ENCODE measurements at regions of chr7 and their contacts with region 1.

Region 1: GRCh38 chr7:26090927-26091519 is 61.0 kb upstream of the NFE2L3 start:
- DNase-seq: peak in 3 of 10 donors; percentile 60 to 65 (median 62)
- ATAC-seq: peak; percentile 72 to 83
- H3K4me3 Mint-ChIP-seq: peak overlapping the region in 6 of 10 donors; percentile 11 to 67 (median 41)
- H3K27ac Mint-ChIP-seq: peak overlapping the region in 5 of 10 donors; percentile 0 to 49 (median 24)
- H3K4me1 Mint-ChIP-seq: peaks cover 12 to 25% (median 21%) of the 10 kb centered on the region in 4 donors
- H3K27me3 Mint-ChIP-seq: no peaks in the 10 kb centered on the region

Region 2: DNA sequence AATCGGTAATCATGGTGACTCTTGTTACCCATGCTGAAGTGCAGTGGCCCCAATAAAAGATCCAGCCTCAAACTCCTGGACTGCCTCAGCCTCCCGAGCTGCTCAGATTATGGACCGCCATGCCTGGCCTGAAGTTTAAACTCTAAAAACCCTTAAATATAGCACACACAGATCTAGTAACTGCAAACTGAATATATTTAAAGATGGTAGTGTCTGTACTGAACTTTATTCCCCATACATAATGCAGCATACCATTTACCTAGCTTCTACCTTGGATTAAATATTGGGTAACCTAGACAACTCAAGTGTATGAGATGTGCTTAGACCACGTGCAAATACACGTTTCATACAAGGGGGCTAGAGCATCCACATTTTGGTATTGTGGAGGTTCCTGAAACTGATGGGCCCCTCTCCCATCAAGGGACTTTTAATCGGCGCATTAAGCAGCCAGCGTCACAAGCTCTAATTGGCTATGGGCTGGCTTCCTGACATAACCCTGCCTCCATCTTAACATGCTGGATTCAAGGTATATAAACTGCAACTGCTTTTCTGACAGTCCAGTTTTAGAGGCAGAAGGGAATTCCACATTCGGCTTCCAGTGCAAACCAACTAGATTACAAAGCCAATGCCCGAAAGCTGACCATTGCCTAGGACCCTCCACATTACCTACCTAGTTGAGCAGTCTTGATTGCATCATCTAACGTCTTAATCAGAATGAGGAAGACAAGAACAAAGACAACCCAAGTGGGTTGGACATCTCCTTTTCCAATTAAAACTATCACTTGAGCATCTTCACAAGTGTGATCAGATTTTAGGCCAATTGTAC is 96.6 kb after region 1 on chr7:
- POLR2A ChIA-PET with region 1: interaction called, 13 read pairs
- DNase-seq: peak in 1 of 10 donors; percentile 17
- ATAC-seq: peak; percentile 19 to 20
- H3K4me3 Mint-ChIP-seq: peak overlapping the region in 2 of 10 donors; percentile 30 to 65
- H3K27ac Mint-ChIP-seq: peak overlapping the region; percentile 20 to 90 (median 68)
- H3K4me1 Mint-ChIP-seq: peaks cover 32 to 90% (median 82%) of the 10 kb centered on the region in 4 donors
- H3K27me3 Mint-ChIP-seq: no peaks in the 10 kb centered on the region